Dorsolateral prefrontal cortex (tissue), 120 donors: ENCODE measurements at regions of chr19 and their contacts with region 1.

Region 1: DNA sequence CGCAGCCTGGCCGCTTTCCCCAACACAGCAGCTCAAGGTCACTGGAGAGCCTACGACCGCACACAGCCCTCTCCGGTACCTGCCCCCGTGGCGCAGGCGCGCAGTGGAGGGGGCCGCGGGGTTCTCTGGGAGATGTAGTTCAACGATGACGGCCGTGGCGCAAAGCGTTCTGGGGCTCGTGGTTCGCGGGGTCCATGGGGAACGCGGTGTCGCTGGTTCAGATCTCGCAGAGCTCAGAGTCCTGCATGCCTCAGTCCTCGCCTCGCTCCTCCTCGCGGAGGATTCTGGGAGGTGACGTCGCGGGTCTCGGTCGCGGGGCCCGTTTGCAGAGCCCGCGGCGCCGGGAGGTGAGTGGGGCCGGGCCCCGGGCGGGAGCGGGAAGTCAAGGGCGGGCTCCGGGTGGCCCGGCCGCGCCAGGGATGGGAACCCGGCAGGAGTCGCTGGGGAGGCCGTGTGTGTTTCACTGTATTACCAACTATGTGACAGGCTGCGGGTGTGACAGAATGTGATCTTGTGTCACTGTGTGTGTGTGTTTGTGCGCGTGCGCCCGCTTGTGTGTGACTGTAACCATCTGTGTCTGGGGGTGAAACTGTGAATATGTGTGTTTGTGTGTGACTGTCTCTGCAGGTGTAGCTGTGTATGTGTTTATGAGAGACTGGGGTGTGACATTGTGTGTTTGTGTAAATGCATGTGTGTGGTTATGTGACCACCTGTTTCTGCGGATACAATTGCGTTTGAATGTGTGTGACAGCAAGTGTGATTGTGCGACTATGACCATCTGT is at the start of gene ZNF527:
- DNase-seq: peak; percentile 97 to 100 (median 99)
- H3K4me3 ChIP-seq: peak within 1 kb of the TSS; percentile 61 to 99 (median 83)
- H3K27ac ChIP-seq: peak within 1 kb of the TSS; percentile 66 to 96 (median 89)
- H3K27me3 ChIP-seq: no peaks in the 10 kb centered on the region
- CTCF ChIP-seq: peak in 36 of 56 donors; percentile 5 to 52 (median 29)
- total RNA-seq, gene ZNF527: 8.0 to 20.0 (median 11.8) TPM

Region 2: GRCh38 chr19:36973021-36973843 is 397.8 kb before region 1 on chr19:
- intact Hi-C with region 1: loop called in 1 of 2 experiments (anchors 5 kb)
- DNase-seq: peak; percentile 77 to 93 (median 87)
- H3K4me3 ChIP-seq: peak overlapping the region; percentile 50 to 91 (median 79)
- H3K27ac ChIP-seq: peak overlapping the region in 58 of 59 donors; percentile 29 to 93 (median 83)
- H3K27me3 ChIP-seq: no peaks in the 10 kb centered on the region
- CTCF ChIP-seq: peak; percentile 52 to 100 (median 86)

Region 3: GRCh38 chr19:37148214-37148613 is 222.9 kb before region 1 on chr19:
- intact Hi-C with region 1: no loop called
- DNase-seq: no peak
- H3K4me3 ChIP-seq: no peak overlapping the region
- H3K27ac ChIP-seq: no peak overlapping the region
- H3K27me3 ChIP-seq: peaks cover 0 to 3% (median 0%) of the 10 kb centered on the region in 45 donors
- CTCF ChIP-seq: no peak

Region 4: GRCh38 chr19:37160153-37160552 is 210.9 kb before region 1 on chr19:
- intact Hi-C with region 1: no loop called
- DNase-seq: no peak
- H3K4me3 ChIP-seq: no peak overlapping the region
- H3K27ac ChIP-seq: no peak overlapping the region
- H3K27me3 ChIP-seq: no peaks in the 10 kb centered on the region
- CTCF ChIP-seq: no peak

Region 5: GRCh38 chr19:37172368-37173366 is 198.4 kb before region 1 on chr19 and contains the start of gene ZNF585A:
- intact Hi-C with region 1: loop called in 1 of 2 experiments (anchors 2 kb)
- DNase-seq: peak; percentile 85 to 98 (median 94)
- H3K4me3 ChIP-seq: peak within 1 kb of the TSS; percentile 39 to 95 (median 78)
- H3K27ac ChIP-seq: peak within 1 kb of the TSS in 54 of 59 donors; percentile 19 to 85 (median 68)
- H3K27me3 ChIP-seq: no peaks in the 10 kb centered on the region
- CTCF ChIP-seq: peak in 55 of 56 donors; percentile 18 to 76 (median 56)
- total RNA-seq, gene ZNF585A: 13.4 to 28.1 (median 20.6) TPM

Region 6: GRCh38 chr19:37309834-37310575 is 61.1 kb before region 1 on chr19:
- intact Hi-C with region 1: loop called in 1 of 2 experiments (anchors 10 kb)
- DNase-seq: no peak
- H3K4me3 ChIP-seq: no peak overlapping the region
- H3K27ac ChIP-seq: no peak overlapping the region
- H3K27me3 ChIP-seq: no peaks in the 10 kb centered on the region
- CTCF ChIP-seq: peak in 1 of 56 donors; percentile 6

Region 7: DNA sequence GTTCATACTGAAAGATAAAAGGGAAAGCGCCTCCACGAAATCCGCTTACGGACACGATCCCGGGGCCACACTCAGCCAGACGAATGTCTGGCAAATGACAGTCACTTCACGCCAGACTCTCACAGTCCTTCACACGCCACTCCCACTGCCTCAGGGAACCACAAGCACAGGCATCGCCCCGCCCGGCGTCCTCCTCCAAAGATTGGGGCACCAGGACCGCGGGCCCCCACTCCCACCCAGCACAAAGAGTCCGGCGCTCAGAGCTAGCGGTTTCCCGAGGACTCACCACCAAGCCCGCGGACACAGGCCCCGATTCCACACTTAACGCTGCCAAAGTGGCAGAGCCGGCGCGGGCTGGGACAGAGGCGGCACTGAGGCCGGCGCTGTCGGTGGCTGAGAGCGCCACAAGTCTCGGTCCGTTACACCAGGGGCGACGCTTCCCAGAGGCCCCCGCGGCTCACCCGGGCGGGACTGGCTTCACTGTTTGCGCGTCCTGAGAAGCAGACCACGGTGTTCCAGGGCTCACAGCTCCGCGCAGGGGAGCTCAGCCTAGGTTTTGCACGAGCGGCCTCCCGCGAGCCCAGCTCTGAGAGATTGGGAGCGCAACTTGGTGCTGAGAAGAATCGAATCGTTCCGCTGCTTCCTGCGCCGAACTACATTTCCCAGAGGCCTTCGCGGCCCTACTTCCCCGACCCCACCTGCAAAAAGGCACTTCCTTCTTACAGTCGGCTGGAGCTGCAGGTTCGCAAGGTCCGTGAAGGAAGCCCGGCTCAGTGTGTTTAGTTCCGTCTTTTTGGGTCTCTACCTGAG is 95.9 kb after region 1 on chr19 and contains the start of gene ZNF569:
- intact Hi-C with region 1: loop called (anchors 1 to 2 kb)
- DNase-seq: peak; percentile 92 to 97 (median 94)
- H3K4me3 ChIP-seq: peak within 1 kb of the TSS; percentile 67 to 100 (median 91)
- H3K27ac ChIP-seq: peak within 1 kb of the TSS; percentile 63 to 99 (median 96)
- H3K27me3 ChIP-seq: no peaks in the 10 kb centered on the region
- CTCF ChIP-seq: peak in 30 of 56 donors; percentile 6 to 49 (median 26)
- total RNA-seq, gene ZNF569: 8.0 to 18.7 (median 13.3) TPM

Region 8: DNA sequence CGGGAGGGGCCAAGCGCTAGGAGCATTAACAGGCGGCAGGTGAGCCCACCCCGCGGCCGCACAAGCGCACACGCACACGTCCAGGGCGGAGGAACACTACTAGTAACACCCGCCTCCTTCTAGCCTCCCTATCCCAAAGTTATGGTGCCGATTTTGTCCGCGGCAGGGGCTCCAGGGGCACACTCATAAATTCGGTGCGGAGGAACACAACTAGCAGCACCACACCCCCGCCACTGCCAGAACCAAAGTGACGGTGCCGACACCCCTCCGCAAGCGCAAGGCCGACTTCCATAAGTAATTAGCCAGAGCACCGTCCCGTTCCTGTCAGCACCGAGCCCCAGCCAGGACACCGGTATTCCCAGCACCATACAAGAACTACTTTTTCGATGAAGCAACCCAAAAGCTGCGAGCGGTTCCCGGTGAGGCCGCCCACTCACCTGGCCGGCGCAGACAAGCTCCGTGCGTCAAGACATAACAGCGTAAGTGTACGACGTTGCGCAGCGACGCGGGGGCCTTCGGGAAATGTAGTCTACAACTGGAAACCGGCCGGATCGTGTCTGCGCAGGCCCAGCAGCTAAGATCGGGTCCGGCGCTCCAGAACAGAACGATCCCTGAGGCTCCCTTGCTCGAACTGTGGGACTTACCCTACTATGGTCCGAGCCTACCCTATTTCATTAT is 223.4 kb after region 1 on chr19 and contains the starts of genes ZNF540 and ZNF571:
- intact Hi-C with region 1: loop called in 1 of 2 experiments (anchors 2 kb)
- DNase-seq: peak; percentile 92 to 97 (median 95)
- H3K4me3 ChIP-seq: peak within 1 kb of the TSS; percentile 61 to 98 (median 85)
- H3K27ac ChIP-seq: peak within 1 kb of the TSS; percentile 73 to 98 (median 94)
- H3K27me3 ChIP-seq: no peaks in the 10 kb centered on the region
- CTCF ChIP-seq: peak in 16 of 56 donors; percentile 3 to 36 (median 14)
- total RNA-seq, gene ZNF540: 15.8 to 44.6 (median 29.0) TPM
- total RNA-seq, gene ZNF571: 6.7 to 27.7 (median 12.5) TPM